WTC11 (cell line): ENCODE measurements at regions of chr6 and their contacts with region 1.

Region 1: DNA sequence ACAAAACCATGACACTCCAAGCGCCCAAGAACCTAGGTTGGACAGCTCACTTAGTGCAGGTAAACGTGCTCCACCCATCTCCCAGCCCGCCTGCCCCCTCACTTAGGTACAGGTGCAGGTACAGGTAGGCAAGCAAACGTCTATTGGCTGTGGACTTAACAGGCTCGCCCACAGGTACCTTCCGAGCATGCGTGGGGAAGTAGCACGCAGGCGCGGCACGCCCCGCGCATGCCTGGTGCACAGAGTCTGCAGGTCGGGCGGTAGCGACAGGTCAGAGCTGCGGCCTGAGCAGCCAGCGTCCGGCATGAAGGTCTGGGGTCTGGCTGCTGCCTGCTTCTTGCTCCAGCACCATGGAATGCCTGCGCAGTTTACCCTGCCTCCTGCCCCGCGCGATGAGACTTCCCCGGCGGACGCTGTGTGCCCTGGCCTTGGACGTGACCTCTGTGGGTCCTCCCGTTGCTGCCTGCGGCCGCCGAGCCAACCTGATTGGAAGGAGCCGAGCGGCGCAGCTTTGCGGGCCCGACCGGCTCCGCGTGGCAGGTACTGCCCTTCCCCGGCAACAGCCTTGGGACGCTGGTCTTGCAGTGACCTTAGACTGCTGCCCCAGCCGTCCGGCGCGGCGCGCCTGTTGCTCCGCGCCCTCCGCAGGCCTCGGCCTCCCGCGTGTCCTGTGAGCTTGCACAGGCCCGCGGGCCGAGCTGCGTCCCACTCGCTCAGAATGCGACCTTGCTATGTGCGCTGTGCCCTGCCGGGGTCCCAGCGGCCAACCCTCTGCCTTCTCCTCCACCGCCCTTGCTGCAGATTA is at the start of gene MRS2:
- DNase-seq: peak; percentile 73
- ATAC-seq: peak; percentile 73
- H3K4me3 Mint-ChIP-seq: peak within 1 kb of the TSS; percentile 99
- H3K27ac Mint-ChIP-seq: peak within 1 kb of the TSS; percentile 96
- H3K4me1 Mint-ChIP-seq: peaks cover 56% of the 10 kb centered on the region
- H3K27me3 Mint-ChIP-seq: no peaks in the 10 kb centered on the region
- CTCF ChIP-seq: no peak
- total RNA-seq, gene MRS2: 71.1 to 91.6 TPM (median 73.1 TPM) in 3 replicates

Region 2: DNA sequence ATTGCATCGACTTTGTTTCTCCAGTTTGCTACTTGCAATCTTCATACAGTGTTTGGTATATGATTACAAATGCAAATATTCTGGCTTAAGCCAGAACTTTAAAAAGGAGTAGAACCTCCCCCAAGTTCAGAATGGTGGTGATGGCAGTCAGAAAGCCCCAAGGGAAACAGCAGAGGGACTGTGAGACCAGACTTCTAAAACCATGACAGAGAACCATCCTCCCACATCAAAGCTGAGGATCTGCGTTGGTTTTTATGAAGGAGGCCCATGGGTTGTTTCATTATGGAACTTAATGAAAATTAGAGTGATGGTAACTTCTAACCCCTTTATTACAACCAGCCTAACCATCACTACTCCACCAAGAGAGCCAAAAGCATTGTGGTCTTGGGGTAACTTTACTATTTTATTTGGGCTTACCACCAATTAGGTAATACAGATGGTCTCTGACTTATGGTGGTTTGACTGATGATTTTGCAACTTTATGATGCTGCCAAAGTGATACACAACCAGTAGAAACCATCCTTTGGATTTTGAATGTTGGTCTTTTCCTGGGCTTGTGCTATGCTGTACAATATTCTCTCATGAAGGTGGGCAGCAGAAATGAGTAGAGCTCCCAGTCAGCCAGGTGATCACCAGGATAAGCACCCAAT is 11.0 kb before region 1 on chr6:
- CTCF ChIA-PET with region 1: interaction called, 14 read pairs
- POLR2A ChIA-PET with region 1: no interaction called
- DNase-seq: no peak
- ATAC-seq: no peak
- H3K4me3 Mint-ChIP-seq: no peak overlapping the region
- H3K27ac Mint-ChIP-seq: no peak overlapping the region
- H3K4me1 Mint-ChIP-seq: no peaks in the 10 kb centered on the region
- H3K27me3 Mint-ChIP-seq: no peaks in the 10 kb centered on the region; the same call in 1 of the 2 replicates
- CTCF ChIP-seq: no peak

Region 3: GRCh38 chr6:24547243-24547642 is 144.3 kb after region 1 on chr6:
- CTCF ChIA-PET with region 1: no interaction called
- POLR2A ChIA-PET with region 1: interaction called, 10 read pairs
- DNase-seq: peak; percentile 36
- ATAC-seq: peak; percentile 69
- H3K4me3 Mint-ChIP-seq: no peak overlapping the region
- H3K27ac Mint-ChIP-seq: no peak overlapping the region
- H3K4me1 Mint-ChIP-seq: peaks cover 10% of the 10 kb centered on the region
- H3K27me3 Mint-ChIP-seq: no peaks in the 10 kb centered on the region
- CTCF ChIP-seq: no peak